Activated CD8-positive, alpha-beta T cell treated with anti-CD3 and anti-CD28 coated beads for 36 hours (primary cell): ENCODE measurements at regions of chr5 and their contacts with region 1.

Region 1: GRCh38 chr5:123511648-123512605 is at the start of gene CSNK1G3:
- DNase-seq: peak; percentile 97
- ATAC-seq: peak; percentile 92
- H3K4me3 Mint-ChIP-seq: peak within 1 kb of the TSS; percentile 92
- H3K27ac Mint-ChIP-seq: peak within 1 kb of the TSS; percentile 98
- H3K4me1 Mint-ChIP-seq: peaks cover 46% of the 10 kb centered on the region
- H3K27me3 Mint-ChIP-seq: peaks cover 1% of the 10 kb centered on the region
- CTCF ChIP-seq: no peak
- total RNA-seq, gene CSNK1G3: 36.1 to 39.2 TPM

Region 2: GRCh38 chr5:123367739-123368138 is 144.2 kb before region 1 on chr5:
- CTCF ChIA-PET with region 1: no interaction called
- POLR2A ChIA-PET with region 1: no interaction called
- intact Hi-C with region 1: no loop called
- DNase-seq: no peak
- ATAC-seq: no peak
- H3K4me3 Mint-ChIP-seq: no peak overlapping the region
- H3K27ac Mint-ChIP-seq: no peak overlapping the region
- H3K4me1 Mint-ChIP-seq: no peaks in the 10 kb centered on the region
- H3K27me3 Mint-ChIP-seq: no peaks in the 10 kb centered on the region
- CTCF ChIP-seq: peak; percentile 38

Region 3: DNA sequence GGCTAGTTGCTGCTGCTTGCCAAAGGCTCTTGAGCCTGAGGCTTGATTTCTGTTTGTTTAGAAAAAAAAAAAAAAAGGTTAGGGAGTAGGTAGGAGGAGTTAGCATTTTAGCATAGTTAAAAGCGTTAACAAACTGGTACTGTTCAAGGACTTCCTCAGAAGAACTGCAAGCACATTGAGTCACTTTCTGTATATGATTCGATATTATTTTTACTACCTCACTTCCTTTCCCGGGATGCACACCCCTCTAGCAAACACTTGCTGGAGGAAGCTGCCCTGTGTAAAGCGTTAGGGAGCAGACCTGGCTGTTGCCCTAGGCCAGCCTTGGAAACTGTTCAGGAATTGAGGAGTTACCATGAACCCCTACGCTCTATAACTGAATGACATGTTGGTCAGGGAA is 73.0 kb before region 1 on chr5:
- CTCF ChIA-PET with region 1: no interaction called
- POLR2A ChIA-PET with region 1: no interaction called
- intact Hi-C with region 1: loop called (anchors 5 kb)
- DNase-seq: peak; percentile 52
- ATAC-seq: peak; percentile 80
- H3K4me3 Mint-ChIP-seq: no peak overlapping the region
- H3K27ac Mint-ChIP-seq: peak overlapping the region; percentile 77
- H3K4me1 Mint-ChIP-seq: peaks cover 29% of the 10 kb centered on the region
- H3K27me3 Mint-ChIP-seq: no peaks in the 10 kb centered on the region
- CTCF ChIP-seq: no peak

Region 4: DNA sequence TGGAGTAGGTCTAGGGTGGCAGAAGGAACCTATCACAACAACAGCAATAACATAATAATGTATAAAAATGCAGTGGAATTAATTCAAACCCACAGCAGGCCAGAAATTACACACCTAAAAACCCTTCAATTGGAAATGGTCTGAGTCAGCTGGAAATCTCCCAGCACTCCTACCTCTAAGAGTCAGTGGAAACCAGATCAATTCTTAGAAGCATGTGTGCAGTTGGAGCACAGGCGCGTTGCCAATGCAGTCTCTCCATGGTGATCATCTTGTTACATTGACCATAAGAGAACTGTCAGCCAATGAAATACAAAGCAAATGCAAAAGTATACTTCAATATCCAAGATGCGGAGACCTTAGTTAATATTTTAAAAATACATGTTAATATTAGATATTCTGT is 15.0 kb before region 1 on chr5:
- CTCF ChIA-PET with region 1: interaction called, 6 read pairs
- POLR2A ChIA-PET with region 1: interaction called, 11 read pairs
- intact Hi-C with region 1: no loop called
- DNase-seq: peak; percentile 23
- ATAC-seq: peak; percentile 34
- H3K4me3 Mint-ChIP-seq: no peak overlapping the region
- H3K27ac Mint-ChIP-seq: no peak overlapping the region
- H3K4me1 Mint-ChIP-seq: peaks cover 4% of the 10 kb centered on the region
- H3K27me3 Mint-ChIP-seq: peaks cover 9% of the 10 kb centered on the region
- CTCF ChIP-seq: no peak

Region 5: DNA sequence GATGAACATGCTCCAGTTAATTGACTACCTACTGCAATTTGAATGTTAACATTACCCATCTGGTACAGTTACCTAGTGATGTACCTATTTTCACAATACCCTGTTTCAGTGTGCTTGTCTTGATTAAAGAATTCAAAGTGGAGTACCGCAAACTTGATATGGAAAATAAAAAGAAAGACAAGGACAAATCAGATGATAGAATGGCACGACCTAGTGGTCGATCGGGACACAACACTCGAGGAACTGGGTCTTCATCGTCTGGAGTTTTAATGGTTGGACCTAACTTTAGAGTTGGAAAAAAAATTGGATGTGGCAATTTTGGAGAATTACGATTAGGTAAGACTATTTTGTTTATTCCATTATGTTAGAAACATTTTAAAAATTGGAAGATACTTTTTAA is 33.6 kb after region 1 on chr5:
- CTCF ChIA-PET with region 1: interaction called, 3 read pairs
- POLR2A ChIA-PET with region 1: interaction called, 5 read pairs
- intact Hi-C with region 1: loop called (anchors 5 kb)
- DNase-seq: peak; percentile 42
- ATAC-seq: no peak
- H3K4me3 Mint-ChIP-seq: no peak overlapping the region
- H3K27ac Mint-ChIP-seq: no peak overlapping the region
- H3K4me1 Mint-ChIP-seq: peaks cover 67% of the 10 kb centered on the region
- H3K27me3 Mint-ChIP-seq: no peaks in the 10 kb centered on the region
- CTCF ChIP-seq: peak; percentile 77

Region 6: DNA sequence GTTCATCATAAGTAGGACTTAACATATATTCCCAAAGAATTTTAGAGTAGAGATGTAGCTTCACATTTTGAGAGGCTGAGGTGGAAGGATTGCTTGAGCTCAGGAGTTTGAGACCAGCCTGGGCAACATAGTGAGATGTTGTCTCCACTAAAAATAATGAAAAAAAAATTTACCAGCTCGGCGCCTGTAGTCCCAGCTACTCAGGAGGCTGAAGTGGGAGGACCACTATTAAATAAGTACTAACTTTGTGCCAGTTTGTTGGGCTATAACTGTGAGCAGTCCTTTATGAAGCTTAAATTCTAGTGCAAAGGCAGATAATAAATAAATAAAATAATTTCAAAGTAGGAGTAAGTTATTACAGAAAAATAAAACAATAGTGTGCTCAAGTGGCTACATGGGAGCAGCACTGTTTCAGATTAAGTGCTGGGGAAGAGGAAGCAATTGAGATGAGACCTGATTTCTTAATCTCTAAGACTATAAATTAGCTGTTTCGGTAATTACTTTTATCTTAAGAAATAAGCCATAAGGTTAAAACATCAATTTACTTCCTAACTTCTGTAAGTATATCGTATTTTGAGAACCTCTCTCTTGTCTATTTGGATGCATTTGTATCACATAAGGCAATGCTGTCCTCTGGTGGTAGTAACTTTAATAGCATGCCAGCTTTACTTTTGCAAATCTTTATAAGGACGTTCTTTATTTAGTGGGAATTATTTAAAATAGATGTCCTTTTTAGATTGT is 98.9 kb after region 1 on chr5:
- CTCF ChIA-PET with region 1: interaction called, 4 read pairs
- POLR2A ChIA-PET with region 1: no interaction called
- intact Hi-C with region 1: loop called (anchors 2 kb)
- DNase-seq: peak; percentile 28
- ATAC-seq: peak; percentile 65
- H3K4me3 Mint-ChIP-seq: no peak overlapping the region
- H3K27ac Mint-ChIP-seq: peak overlapping the region; percentile 8
- H3K4me1 Mint-ChIP-seq: peaks cover 8% of the 10 kb centered on the region
- H3K27me3 Mint-ChIP-seq: no peaks in the 10 kb centered on the region
- CTCF ChIP-seq: peak; percentile 88